Psoas muscle (tissue), 8 donors: ENCODE measurements at regions of chr10 and their contacts with region 1.

Region 1: DNA sequence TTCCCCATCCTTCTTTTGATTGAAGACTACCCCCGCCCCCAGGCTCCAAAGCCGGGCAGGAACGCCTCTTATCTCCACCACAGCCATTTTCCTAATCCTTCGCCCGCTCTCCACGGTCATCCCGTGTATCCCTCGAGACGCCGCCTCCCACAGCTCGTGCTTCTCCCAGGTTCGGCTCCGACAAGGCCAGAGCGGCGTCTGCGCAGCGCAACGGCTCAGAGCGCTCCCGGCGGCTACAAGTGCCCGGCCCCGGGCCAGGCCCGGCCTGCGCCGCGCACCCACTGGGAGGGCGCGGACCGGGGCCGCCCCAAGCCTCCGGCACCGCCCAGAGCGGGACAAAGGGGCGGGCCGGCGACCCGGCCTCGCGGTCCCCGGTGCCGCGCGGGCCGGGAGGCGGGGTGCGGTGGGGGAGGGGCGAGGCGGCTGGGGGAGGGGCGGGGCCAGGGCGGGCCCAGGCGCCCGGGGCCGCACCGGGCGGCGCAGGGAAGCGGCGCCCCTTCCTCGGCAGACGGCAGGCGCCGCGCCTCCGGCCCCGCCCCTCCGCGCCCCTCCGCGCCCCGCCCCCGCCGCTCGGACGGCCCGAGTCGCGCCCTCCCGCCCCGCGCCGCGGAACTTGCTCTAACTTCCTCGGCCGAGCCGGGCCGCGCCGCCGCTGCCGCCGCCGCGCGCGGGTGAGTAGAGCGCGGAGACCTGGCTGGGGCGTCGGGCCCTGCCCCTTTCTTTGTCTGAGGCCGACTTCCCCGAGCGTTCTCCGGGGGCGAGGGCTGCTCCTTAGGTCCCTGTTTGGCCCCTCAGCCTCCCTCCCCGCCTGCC is at the start of gene TSPAN14:
- DNase-seq: peak; percentile 90 to 93
- ATAC-seq: peak; percentile 92 to 93 (median 92)
- H3K4me3 ChIP-seq: peak within 1 kb of the TSS; percentile 98
- H3K27ac ChIP-seq: peak within 1 kb of the TSS; percentile 93
- H3K4me1 ChIP-seq: peaks cover 28% of the 10 kb centered on the region
- H3K27me3 ChIP-seq: no peaks in the 10 kb centered on the region
- CTCF ChIP-seq: no peak
- total RNA-seq, gene TSPAN14: 23.9 to 33.3 (median 25.7) TPM

Region 2: GRCh38 chr10:80408242-80409101 is 45.4 kb before region 1 on chr10 and contains the start of gene PRXL2A:
- intact Hi-C with region 1: loop called in 1 of 2 experiments (anchors 5 kb)
- DNase-seq: peak; percentile 82 to 90
- ATAC-seq: peak; percentile 91 to 96 (median 96)
- H3K4me3 ChIP-seq: peak within 1 kb of the TSS; percentile 95
- H3K27ac ChIP-seq: peak within 1 kb of the TSS; percentile 83
- H3K4me1 ChIP-seq: peaks cover 44% of the 10 kb centered on the region
- H3K27me3 ChIP-seq: no peaks in the 10 kb centered on the region
- CTCF ChIP-seq: no peak
- total RNA-seq, gene PRXL2A: 34.2 to 51.8 (median 41.4) TPM

Region 3: GRCh38 chr10:80498833-80499741 is 45.2 kb after region 1 on chr10:
- intact Hi-C with region 1: loop called (anchors 2 kb)
- DNase-seq: peak; percentile 94 to 96
- ATAC-seq: peak; percentile 95 to 96 (median 96)
- H3K4me3 ChIP-seq: no peak overlapping the region
- H3K27ac ChIP-seq: peak overlapping the region; percentile 77
- H3K4me1 ChIP-seq: peaks cover 46% of the 10 kb centered on the region
- H3K27me3 ChIP-seq: no peaks in the 10 kb centered on the region
- CTCF ChIP-seq: no peak

Region 4: DNA sequence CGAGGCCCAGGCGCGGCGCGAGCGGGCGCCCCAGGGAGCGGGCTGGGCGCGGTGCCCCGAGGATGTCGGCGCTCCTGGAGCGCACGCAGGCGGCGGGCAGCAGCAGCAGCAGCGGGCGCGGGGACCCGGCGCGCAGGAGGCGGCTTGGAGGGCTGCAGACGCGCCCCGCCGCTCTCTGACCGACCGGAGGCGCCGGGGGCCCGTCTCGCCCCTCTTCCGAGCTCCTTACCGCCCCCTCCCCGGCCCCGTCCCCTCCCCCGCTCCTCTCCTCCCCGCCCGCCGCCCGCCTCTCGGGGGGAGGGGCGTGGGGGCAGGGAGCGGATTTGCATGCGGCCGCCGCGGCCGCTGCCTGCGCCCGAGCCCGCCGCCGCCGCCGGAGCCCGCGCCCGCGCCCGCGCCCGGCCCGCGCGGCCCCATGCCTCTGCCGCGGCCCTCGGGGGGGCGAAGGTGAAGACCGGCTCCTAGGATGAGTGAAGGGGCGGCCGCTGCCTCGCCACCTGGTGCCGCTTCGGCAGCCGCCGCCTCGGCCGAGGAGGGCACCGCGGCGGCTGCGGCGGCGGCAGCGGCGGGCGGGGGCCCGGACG is 1421.1 kb after region 1 on chr10 and contains the start of gene NRG3:
- intact Hi-C with region 1: no loop called
- DNase-seq: no peak
- ATAC-seq: no peak
- H3K4me3 ChIP-seq: peak within 1 kb of the TSS; percentile 42
- H3K27ac ChIP-seq: no peak within 1 kb of the TSS
- H3K4me1 ChIP-seq: peaks cover 3% of the 10 kb centered on the region
- H3K27me3 ChIP-seq: peaks cover 7 to 75% (median 19%) of the 10 kb centered on the region in 3 donors
- CTCF ChIP-seq: no peak
- total RNA-seq, gene NRG3: 0.10 TPM in 1 of 4 donors, not detected in the others